Mucosa of descending colon (tissue), 3 donors: ENCODE measurements at regions of chr11 and their contacts with region 1.

Region 1: GRCh38 chr11:74449369-74449931 is 17.9 kb downstream of the KCNE3 start:
- DNase-seq: peak in 1 of 3 donors; percentile 77
- ATAC-seq: peak; percentile 83
- H3K4me3 ChIP-seq: no peak overlapping the region
- H3K4me1 ChIP-seq: peaks cover 5% of the 10 kb centered on the region
- CTCF ChIP-seq: no peak

Region 2: GRCh38 chr11:74102321-74102720 is 347.1 kb before region 1 on chr11:
- intact Hi-C with region 1: no loop called
- DNase-seq: no peak
- ATAC-seq: no peak
- H3K4me3 ChIP-seq: no peak overlapping the region
- H3K4me1 ChIP-seq: no peaks in the 10 kb centered on the region
- CTCF ChIP-seq: no peak

Region 3: DNA sequence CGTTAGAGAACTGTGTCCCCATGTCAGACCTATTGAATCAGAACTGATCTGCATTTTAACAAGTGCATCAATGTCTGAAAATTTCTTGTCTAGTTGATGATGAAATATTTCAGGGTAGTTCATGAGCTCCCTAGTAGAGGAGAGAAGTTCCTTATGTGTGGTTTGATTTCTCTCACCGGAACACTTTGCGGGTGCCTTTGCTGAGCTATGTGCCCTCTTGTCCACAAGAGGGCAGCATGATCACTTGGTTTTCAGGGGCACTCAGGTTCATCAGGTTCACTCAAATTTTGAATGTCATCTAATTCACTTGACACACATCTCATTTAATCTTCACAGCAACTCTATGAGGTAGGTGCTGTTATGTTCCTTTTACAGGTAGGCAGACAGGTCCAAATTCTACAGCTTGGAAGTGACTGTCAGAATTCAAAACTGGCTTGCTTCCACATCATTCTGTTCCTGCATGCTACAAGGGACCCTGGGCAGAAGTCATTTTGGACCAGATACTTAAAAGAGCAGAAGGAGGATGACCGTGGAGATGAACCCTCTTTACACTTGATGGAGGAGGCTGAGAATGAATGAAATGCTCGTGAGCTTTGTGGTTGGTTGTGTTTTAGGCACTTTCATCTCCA is 193.6 kb before region 1 on chr11:
- intact Hi-C with region 1: loop called (anchors 5 to 10 kb)
- DNase-seq: peak in 2 of 3 donors; percentile 48 to 61
- ATAC-seq: peak; percentile 86
- H3K4me3 ChIP-seq: no peak overlapping the region
- H3K4me1 ChIP-seq: no peaks in the 10 kb centered on the region
- CTCF ChIP-seq: peak; percentile 89

Region 4: DNA sequence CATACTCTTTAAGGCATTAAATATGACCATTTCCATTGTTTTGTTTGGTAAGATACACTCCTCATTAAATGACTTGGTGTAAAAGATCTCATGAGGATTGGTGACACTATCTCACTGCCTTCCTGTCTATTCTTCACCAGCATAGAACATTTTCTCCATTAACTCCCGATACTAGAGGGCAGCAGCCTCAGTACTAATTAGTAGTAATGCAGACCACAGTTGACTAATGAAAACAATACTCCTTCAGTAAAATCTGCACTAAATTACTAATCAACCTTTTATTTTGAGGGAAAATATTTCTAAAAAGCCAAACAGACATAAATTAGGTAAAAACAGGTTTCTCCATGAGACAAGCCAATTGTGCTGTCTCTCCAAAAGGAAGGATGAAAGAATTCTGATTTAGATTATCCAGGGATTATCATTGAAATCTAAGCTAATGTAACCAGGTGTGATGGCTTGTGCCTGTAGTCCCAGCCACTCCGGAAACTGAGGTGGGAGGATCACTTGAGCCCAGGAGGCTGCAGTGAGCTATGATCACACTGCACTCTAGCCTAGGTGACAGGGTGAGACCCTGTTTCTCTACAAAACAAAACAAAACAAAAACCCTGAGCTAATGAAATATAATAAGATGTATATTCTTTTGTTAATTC is 60.6 kb before region 1 on chr11:
- intact Hi-C with region 1: loop called (anchors 5 kb)
- DNase-seq: peak in 1 of 3 donors; percentile 94
- ATAC-seq: peak; percentile 86
- H3K4me3 ChIP-seq: no peak overlapping the region
- H3K4me1 ChIP-seq: peaks cover 5% of the 10 kb centered on the region
- CTCF ChIP-seq: no peak

Region 5: DNA sequence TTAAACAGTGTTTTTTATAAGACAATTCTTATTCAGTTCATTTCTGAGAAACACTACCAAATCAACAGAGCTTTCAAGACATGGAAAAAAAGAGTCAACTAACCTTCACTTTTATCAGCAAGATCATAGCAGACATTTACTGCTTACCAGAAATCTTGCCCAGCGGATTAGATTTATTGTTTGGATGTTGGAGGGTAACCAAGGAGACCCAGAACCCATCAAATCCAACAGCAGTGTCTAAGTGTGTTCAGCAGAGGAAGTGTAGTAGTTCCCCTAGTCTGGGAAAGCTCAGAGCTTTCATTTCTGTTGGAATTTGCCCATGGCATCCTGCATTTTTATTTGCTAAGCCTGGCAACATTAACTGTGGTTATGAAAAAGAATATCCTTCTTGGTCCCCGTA is 48.8 kb before region 1 on chr11:
- intact Hi-C with region 1: no loop called
- DNase-seq: no peak
- ATAC-seq: no peak
- H3K4me3 ChIP-seq: no peak overlapping the region
- H3K4me1 ChIP-seq: peaks cover 7% of the 10 kb centered on the region
- CTCF ChIP-seq: no peak

Region 6: GRCh38 chr11:74570266-74571061 is 121.0 kb after region 1 on chr11:
- intact Hi-C with region 1: loop called in 1 of 2 experiments (anchors 2 kb)
- DNase-seq: peak in 2 of 3 donors; percentile 41 to 84
- ATAC-seq: peak; percentile 68
- H3K4me3 ChIP-seq: no peak overlapping the region
- H3K4me1 ChIP-seq: peaks cover 27% of the 10 kb centered on the region
- CTCF ChIP-seq: peak; percentile 28

Region 7: GRCh38 chr11:74739546-74740270 is 290.3 kb after region 1 on chr11:
- intact Hi-C with region 1: loop called in 1 of 2 experiments (anchors 5 kb)
- DNase-seq: peak in 2 of 3 donors; percentile 50 to 52
- ATAC-seq: peak; percentile 94
- H3K4me3 ChIP-seq: no peak overlapping the region
- H3K4me1 ChIP-seq: no peaks in the 10 kb centered on the region
- CTCF ChIP-seq: peak; percentile 92